WTC11 (cell line): ENCODE measurements at regions of chr16 and their contacts with region 1.

Region 1: DNA sequence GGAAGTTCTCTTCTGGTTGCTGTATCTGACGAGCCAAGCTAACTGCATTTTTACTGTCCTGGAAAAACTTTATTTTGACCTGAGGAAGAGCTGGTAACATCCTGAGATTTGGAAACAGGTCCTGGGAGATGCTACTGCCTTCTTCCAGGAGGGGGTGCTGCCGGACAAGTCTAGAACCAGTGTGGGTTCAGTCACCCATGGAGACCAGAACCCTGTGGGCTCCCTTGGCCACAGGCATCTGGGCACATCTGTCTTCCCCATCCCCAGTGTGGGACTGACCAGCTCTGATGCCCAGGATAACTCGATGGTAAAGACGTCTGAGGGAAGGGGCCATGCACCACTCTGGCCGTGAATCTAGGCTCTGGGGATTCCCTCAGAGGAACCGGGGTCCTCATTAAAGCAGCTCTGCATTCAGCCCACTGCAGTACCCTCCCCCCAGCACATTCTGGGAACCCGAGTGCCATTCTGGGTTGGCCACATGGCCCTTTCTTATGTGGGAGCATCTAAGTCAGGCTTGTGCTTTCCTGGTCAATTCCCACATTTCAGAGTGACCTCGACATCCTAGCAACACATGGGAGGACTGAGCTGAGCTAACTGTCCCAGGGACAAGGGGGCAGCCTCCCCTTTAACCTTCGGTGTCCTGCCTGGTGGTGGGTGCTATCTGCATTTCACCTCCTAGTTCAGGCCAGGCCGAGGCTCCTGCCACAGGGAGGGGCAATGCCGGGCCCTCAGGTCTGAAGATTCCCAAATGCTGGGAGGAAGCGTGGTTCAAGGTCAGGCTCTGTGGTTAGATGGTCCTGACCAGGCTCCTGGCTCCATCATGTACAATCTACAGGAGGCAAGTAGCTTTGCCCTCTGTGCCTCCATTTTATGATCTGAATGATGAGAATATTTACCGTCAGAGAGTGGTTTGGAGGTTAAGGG is 6.4 kb downstream of the C16orf86 start:
- DNase-seq: peak; percentile 79
- ATAC-seq: peak; percentile 62
- H3K4me3 Mint-ChIP-seq: no peak overlapping the region
- H3K27ac Mint-ChIP-seq: peak overlapping the region; percentile 30; the same call in 1 of the 2 replicates
- H3K4me1 Mint-ChIP-seq: no peaks in the 10 kb centered on the region; the same call in 1 of the 2 replicates
- H3K27me3 Mint-ChIP-seq: no peaks in the 10 kb centered on the region
- CTCF ChIP-seq: peak; percentile 62

Region 2: GRCh38 chr16:67471758-67472384 is 201.1 kb before region 1 on chr16:
- CTCF ChIA-PET with region 1: no interaction called
- POLR2A ChIA-PET with region 1: no interaction called
- DNase-seq: no peak
- ATAC-seq: no peak
- H3K4me3 Mint-ChIP-seq: no peak overlapping the region
- H3K27ac Mint-ChIP-seq: no peak overlapping the region; the same call in 1 of the 2 replicates
- H3K4me1 Mint-ChIP-seq: no peaks in the 10 kb centered on the region
- H3K27me3 Mint-ChIP-seq: no peaks in the 10 kb centered on the region; the same call in 1 of the 2 replicates
- CTCF ChIP-seq: no peak

Region 3: DNA sequence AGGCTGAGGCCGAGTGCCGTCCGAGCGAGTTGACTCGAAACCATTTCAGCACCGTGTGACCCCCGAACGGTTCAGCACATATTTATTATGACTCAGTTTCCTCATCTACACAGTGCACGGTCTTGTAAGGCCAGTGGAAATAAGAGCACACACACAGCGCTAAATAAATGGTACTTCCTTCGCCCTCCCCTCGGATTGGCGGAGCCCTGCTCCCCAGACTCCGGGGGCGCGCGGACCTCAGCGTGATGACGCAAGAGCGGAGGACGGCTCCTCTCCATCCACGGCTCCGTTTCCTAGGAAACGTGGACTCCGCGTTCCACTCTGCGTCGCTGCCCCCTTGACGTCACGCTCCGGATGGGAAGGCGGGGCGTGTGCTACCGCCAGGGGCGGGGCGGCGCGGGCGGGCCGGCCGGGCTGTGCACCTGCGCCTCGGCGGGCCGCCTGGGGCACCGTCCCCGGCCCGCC is 12.4 kb before region 1 on chr16 and contains the start of gene PARD6A:
- CTCF ChIA-PET with region 1: interaction called, 30 read pairs
- POLR2A ChIA-PET with region 1: no interaction called
- DNase-seq: peak; percentile 96
- ATAC-seq: peak; percentile 72
- H3K4me3 Mint-ChIP-seq: peak within 1 kb of the TSS; percentile 91
- H3K27ac Mint-ChIP-seq: peak within 1 kb of the TSS; percentile 98
- H3K4me1 Mint-ChIP-seq: peaks cover 19% of the 10 kb centered on the region
- H3K27me3 Mint-ChIP-seq: peaks cover 5% of the 10 kb centered on the region
- CTCF ChIP-seq: no peak
- total RNA-seq, gene PARD6A: 17.1 to 18.5 TPM (median 17.4 TPM) in 3 replicates

Region 4: DNA sequence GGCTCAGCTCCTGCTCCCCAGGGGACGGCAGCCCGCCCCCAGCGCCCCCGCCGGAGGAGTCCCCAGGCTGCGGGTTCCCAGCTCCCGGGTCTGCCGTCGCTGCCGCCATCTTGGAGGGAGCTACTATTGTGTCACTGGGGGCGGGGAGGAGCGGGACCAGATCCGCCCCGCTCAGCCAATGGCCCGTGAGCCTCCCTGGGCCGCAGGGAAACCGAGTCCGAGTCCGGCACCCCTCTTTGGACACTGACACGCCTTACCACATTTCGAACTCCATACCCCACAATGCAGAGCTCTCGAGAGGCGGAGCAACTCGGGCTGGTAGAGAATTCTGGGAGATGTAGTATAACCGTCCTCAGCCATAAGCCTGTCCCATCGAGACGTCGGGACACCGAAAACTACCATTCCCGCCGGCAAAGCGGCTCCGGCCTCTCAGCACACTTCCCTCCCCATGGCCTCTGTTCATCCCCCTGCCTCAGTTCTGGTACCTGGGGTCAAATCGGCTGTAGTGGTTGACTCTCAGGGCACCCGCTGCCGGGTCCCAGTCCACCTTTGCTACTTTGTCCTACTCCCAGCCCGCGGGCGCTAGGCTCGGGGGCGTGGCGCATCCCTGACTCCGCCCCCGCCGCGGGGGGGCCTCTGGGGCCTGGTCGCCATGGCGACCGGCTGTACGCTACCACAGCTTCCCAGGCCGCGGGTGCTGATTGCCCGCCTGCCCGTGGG is 133.6 kb after region 1 on chr16 and contains the starts of genes RANBP10 and TSNAXIP1:
- CTCF ChIA-PET with region 1: interaction called, 20 read pairs
- POLR2A ChIA-PET with region 1: no interaction called
- DNase-seq: peak; percentile 98
- ATAC-seq: peak; percentile 98
- H3K4me3 Mint-ChIP-seq: peak within 1 kb of the TSS; percentile 92
- H3K27ac Mint-ChIP-seq: peak within 1 kb of the TSS; percentile 92
- H3K4me1 Mint-ChIP-seq: peaks cover 5% of the 10 kb centered on the region
- H3K27me3 Mint-ChIP-seq: no peaks in the 10 kb centered on the region
- CTCF ChIP-seq: no peak
- total RNA-seq, gene RANBP10: 14.0 to 16.9 TPM (median 16.1 TPM) in 3 replicates
- total RNA-seq, gene TSNAXIP1: 0.41 to 1.7 TPM (median 0.48 TPM) in 3 replicates

Region 5: GRCh38 chr16:67865316-67865715 is 192.3 kb after region 1 on chr16:
- CTCF ChIA-PET with region 1: interaction called, 26 read pairs
- POLR2A ChIA-PET with region 1: no interaction called
- DNase-seq: peak; percentile 58
- ATAC-seq: peak; percentile 88
- H3K4me3 Mint-ChIP-seq: no peak overlapping the region
- H3K27ac Mint-ChIP-seq: 0 out of 2 replicates have a peak overlapping the region, but pooled peaks have one; percentile 26
- H3K4me1 Mint-ChIP-seq: peaks cover 4% of the 10 kb centered on the region; the same call in 1 of the 2 replicates
- H3K27me3 Mint-ChIP-seq: no peaks in the 10 kb centered on the region
- CTCF ChIP-seq: no peak

Region 6: GRCh38 chr16:68040507-68041288 is 367.7 kb after region 1 on chr16:
- CTCF ChIA-PET with region 1: interaction called, 11 read pairs
- POLR2A ChIA-PET with region 1: no interaction called
- DNase-seq: peak; percentile 93
- ATAC-seq: peak; percentile 100
- H3K4me3 Mint-ChIP-seq: no peak overlapping the region
- H3K27ac Mint-ChIP-seq: peak overlapping the region; percentile 86
- H3K4me1 Mint-ChIP-seq: no peaks in the 10 kb centered on the region
- H3K27me3 Mint-ChIP-seq: no peaks in the 10 kb centered on the region
- CTCF ChIP-seq: peak; percentile 88